ENCODE measurements at regions of chr6 and their contacts with region 1.

Region 1: GRCh38 chr6:31559958-31560696 is 12.0 kb upstream of the LTA start:
- DNase-seq: peak in 1 of 9 donors; percentile 34
- ATAC-seq: peak; percentile 79
- H3K4me3 ChIP-seq: peak overlapping the region; percentile 48
- H3K4me3 Mint-ChIP-seq: peak overlapping the region; percentile 66 to 87 (median 82)
- H3K27ac ChIP-seq: peak overlapping the region; percentile 57
- H3K27ac Mint-ChIP-seq: peak overlapping the region; percentile 84 to 92 (median 89)
- H3K4me1 ChIP-seq: peaks cover 42 to 60% of the 10 kb centered on the region in 2 donors
- H3K4me1 Mint-ChIP-seq: peaks cover 55 to 78% (median 65%) of the 10 kb centered on the region in 7 donors
- H3K27me3 ChIP-seq: no peaks in the 10 kb centered on the region
- H3K27me3 Mint-ChIP-seq: peaks cover 0 to 27% (median 0%) of the 10 kb centered on the region in 5 donors

Region 2: DNA sequence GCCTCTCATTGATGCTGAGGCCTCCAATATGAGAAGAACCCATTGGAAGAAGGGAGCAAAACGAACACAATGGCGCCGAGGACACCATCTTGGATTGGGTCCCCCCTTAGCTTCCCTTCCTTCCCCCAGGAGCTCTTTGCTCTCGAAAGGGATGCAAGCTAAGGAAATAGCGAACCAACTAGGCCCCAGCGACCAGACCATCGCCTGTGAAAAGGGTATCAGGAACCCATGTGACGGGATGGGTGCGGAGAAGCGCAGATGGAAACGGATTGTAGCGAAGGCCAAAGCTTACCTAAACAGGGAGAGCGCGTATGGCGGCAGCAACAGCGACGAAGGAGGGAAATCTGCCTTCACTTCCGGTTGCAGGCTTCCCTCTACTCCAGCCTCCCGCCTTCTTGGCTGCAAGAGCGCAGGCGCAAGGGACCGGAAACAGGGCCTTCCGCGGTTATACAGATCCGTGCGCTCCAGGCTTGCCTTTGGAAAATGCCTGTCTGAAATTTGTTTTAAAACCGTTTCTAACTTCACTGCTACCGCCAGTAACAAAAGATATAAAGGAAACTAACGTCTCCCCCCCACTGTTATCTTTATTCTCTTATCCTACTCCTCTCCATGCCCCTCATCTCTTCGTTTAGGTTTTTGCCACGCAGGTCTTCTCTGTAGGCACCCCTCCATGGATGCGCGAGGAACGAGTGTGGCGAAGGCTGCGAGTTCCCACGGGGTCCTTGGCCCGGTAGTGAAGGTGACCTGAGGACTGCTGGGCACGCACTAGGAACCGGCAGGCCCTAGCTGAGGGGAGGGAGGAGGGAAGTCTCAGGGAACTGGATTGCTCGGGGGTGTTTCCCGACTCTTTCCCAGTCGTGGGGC is 18.2 kb before region 1 on chr6 and contains the start of gene DDX39B:
- CTCF ChIA-PET with region 1: interaction called, 4 read pairs
- POLR2A ChIA-PET with region 1: interaction called, 3,078 read pairs
- intact Hi-C with region 1: no loop called
- DNase-seq: peak; percentile 80 to 97 (median 94)
- ATAC-seq: peak; percentile 83
- H3K4me3 ChIP-seq: peak within 1 kb of the TSS; percentile 77
- H3K4me3 Mint-ChIP-seq: peak within 1 kb of the TSS; percentile 84 to 99 (median 98)
- H3K27ac ChIP-seq: peak within 1 kb of the TSS; percentile 97
- H3K27ac Mint-ChIP-seq: peak within 1 kb of the TSS; percentile 90 to 100 (median 100)
- H3K4me1 ChIP-seq: peaks cover 34 to 45% of the 10 kb centered on the region in 2 donors
- H3K4me1 Mint-ChIP-seq: peaks cover 34 to 65% (median 55%) of the 10 kb centered on the region in 7 donors
- H3K27me3 ChIP-seq: no peaks in the 10 kb centered on the region
- H3K27me3 Mint-ChIP-seq: no peaks in the 10 kb centered on the region
- total RNA-seq, gene DDX39B: 443 to 761 (median 546) TPM

Region 3: GRCh38 chr6:31575335-31575901 is 15.3 kb after region 1 on chr6 and contains the start of gene TNF:
- CTCF ChIA-PET with region 1: interaction called, 298 read pairs
- POLR2A ChIA-PET with region 1: interaction called, 3,078 read pairs
- intact Hi-C with region 1: loop called (anchors 1 to 2 kb)
- DNase-seq: peak in 4 of 9 donors; percentile 37 to 89 (median 59)
- ATAC-seq: peak; percentile 26
- H3K4me3 ChIP-seq: peak within 1 kb of the TSS; percentile 77
- H3K4me3 Mint-ChIP-seq: peak within 1 kb of the TSS; percentile 85 to 99 (median 94)
- H3K27ac ChIP-seq: peak within 1 kb of the TSS; percentile 97
- H3K27ac Mint-ChIP-seq: peak within 1 kb of the TSS; percentile 91 to 99 (median 99)
- H3K4me1 ChIP-seq: peaks cover 62 to 71% of the 10 kb centered on the region in 2 donors
- H3K4me1 Mint-ChIP-seq: peaks cover 54 to 98% (median 90%) of the 10 kb centered on the region in 7 donors
- H3K27me3 ChIP-seq: no peaks in the 10 kb centered on the region
- H3K27me3 Mint-ChIP-seq: peaks cover 0 to 3% (median 0%) of the 10 kb centered on the region in 5 donors
- total RNA-seq, gene TNF: 5.4 to 125 (median 8.7) TPM

Region 4: GRCh38 chr6:31580807-31581433 is 20.8 kb after region 1 on chr6:
- CTCF ChIA-PET with region 1: interaction called, 298 read pairs
- POLR2A ChIA-PET with region 1: interaction called, 3,078 read pairs
- intact Hi-C with region 1: loop called in 1 of 2 experiments (anchors 2 kb)
- DNase-seq: peak; percentile 79 to 96 (median 88)
- ATAC-seq: peak; percentile 87
- H3K4me3 ChIP-seq: peak overlapping the region; percentile 97
- H3K4me3 Mint-ChIP-seq: peak overlapping the region; percentile 88 to 100 (median 99)
- H3K27ac ChIP-seq: peak overlapping the region; percentile 97
- H3K27ac Mint-ChIP-seq: peak overlapping the region; percentile 94 to 100 (median 97)
- H3K4me1 ChIP-seq: peaks cover 54 to 60% of the 10 kb centered on the region in 2 donors
- H3K4me1 Mint-ChIP-seq: peaks cover 47 to 80% (median 63%) of the 10 kb centered on the region in 7 donors
- H3K27me3 ChIP-seq: no peaks in the 10 kb centered on the region
- H3K27me3 Mint-ChIP-seq: no peaks in the 10 kb centered on the region

Measured in naive thymus-derived CD4-positive, alpha-beta T cell (primary cell).